ENCODE measurements at regions of chr17 and their contacts with region 1.

Region 1: GRCh38 chr17:76932402-76933333 is 64.5 kb downstream of the MGAT5B start:
- DNase-seq: no peak
- ATAC-seq: no peak
- H3K4me3 ChIP-seq: no peak overlapping the region
- H3K27ac ChIP-seq: no peak overlapping the region
- H3K4me1 ChIP-seq: 0 out of 2 replicates have a peak, but pooled peaks cover 11% of the 10 kb centered on the region
- H3K27me3 ChIP-seq: no peaks in the 10 kb centered on the region
- CTCF ChIP-seq: no peak

Region 2: DNA sequence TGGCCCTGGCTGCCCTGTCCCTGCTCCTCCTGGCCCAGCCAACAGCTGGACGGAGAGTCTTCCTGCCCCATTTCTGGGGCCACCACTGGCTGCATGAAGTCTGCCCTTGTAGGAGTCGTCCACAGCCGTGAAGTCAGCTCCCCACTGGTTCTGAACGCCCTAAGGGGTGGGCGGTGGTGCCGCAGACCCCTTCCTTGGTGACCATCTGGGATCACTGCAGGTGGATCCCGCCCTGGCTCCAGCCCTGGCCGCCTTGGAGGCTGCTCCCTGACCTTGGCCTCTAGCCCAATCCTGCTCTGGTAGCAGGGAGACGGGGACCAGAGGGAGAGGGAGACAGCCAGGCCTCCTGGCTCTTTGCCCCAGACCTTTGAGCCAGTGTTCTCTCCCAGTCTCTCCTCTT is 29.0 kb before region 1 on chr17:
- CTCF ChIA-PET with region 1: no interaction called
- POLR2A ChIA-PET with region 1: interaction called, 11 read pairs
- in situ Hi-C with region 1: no loop called
- intact Hi-C with region 1: no loop called
- DNase-seq: no peak
- ATAC-seq: no peak
- H3K4me3 ChIP-seq: no peak overlapping the region
- H3K27ac ChIP-seq: no peak overlapping the region
- H3K4me1 ChIP-seq: peaks cover 4% of the 10 kb centered on the region; the same call in 1 of the 2 replicates
- H3K27me3 ChIP-seq: no peaks in the 10 kb centered on the region
- CTCF ChIP-seq: no peak

Region 3: DNA sequence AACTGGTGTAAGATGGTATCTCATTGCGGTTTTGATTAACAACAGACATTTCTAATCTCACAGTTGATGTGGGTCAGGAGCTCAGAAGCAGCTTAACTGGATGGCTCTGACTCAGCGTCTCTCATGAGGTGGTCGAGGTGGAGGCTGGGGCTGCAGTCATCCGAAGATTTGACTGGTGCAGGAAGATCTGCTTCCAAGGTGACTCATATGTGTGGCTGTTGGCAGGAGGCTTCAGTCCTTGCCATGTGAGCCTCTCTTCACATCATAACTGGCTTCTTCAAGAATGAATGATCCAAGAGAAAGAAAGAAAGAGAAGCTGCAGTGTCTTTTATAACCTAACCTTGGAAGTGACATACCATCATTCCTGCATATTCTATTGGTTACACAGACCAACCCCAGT is 584.2 kb after region 1 on chr17:
- CTCF ChIA-PET with region 1: no interaction called
- POLR2A ChIA-PET with region 1: no interaction called
- in situ Hi-C with region 1: no loop called
- intact Hi-C with region 1: no loop called
- DNase-seq: no peak
- ATAC-seq: peak; percentile 60; the same call in 1 of the 2 replicates
- H3K4me3 ChIP-seq: no peak overlapping the region
- H3K27ac ChIP-seq: no peak overlapping the region
- H3K4me1 ChIP-seq: no peaks in the 10 kb centered on the region
- H3K27me3 ChIP-seq: no peaks in the 10 kb centered on the region
- CTCF ChIP-seq: no peak

Measured in Panc1 (cell line).